ENCODE measurements at regions of chr15 and their contacts with region 1.

Region 1: DNA sequence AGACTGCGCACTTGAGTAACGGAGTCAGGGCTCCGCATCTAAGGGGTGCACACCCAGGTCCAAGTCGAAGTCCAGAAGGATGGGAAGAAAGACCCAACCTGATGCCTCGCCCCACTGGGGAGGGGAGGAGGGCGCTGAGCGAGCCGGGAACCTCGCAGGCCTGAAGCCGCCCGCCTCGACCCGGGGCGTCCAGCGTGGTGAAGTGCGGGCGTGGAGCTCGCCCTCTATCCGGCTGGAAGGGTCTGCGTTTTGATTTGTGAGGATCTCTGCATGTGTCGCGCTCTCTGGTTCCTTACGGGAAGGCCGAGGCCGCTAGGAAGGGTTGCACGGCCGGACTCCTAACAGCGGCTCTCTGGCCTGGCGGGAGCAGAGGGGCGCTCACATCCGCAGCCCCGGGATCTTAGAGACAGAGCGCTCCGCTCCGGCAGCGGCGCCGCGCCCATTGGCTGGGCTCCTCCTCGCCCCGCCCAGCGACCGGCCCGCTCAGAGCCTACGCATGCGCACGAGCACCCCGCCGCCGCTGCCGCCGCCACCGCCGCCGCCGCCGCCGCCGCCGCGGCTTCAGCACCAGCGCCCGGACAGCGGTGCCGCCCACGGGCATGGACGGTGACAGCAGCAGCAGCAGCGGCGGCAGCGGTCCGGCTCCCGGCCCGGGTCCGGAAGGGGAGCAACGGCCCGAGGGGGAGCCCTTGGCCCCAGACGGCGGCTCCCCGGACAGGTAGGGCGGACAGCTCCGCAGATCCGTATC is at the start of gene DISP2:
- DNase-seq: peak; percentile 70 to 93 (median 83)
- H3K4me3 ChIP-seq: peak within 1 kb of the TSS; percentile 50 to 83 (median 72)
- H3K27ac ChIP-seq: peak within 1 kb of the TSS in 54 of 59 donors; percentile 26 to 90 (median 74)
- H3K27me3 ChIP-seq: no peaks in the 10 kb centered on the region
- CTCF ChIP-seq: peak in 37 of 56 donors; percentile 2 to 61 (median 27)
- total RNA-seq, gene DISP2: 11.5 to 58.0 (median 37.6) TPM

Region 2: DNA sequence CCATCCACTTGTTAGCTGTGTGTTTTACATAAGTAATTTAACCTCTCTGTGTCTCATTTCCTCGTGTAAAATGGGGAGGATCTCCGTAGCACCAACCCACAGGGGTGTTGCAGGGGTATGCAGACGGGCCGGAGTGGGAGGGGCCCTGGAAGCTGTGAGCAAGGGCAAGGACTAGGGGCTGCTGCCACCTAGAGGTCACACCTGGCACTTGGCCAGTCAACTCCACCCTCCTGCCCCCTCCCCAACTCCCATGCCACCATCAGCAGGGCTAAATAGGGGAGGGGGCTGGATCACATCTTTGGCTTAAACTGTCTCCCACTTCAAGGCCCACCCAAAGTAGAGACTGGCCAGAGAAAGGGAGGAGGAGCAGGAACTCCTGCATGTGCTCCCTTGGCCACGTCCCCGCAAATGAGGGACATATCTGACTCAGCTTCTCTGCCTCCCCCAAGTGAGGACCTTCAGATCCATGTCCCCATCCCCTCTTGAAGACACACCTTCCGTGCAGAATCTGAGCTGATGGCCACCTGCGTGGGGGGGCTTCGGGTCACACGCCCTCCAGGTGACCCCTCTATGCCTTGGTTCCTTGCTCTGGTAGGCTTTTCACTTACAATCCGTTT is 19.7 kb before region 1 on chr15:
- intact Hi-C with region 1: loop called in 1 of 2 experiments (anchors 2 kb)
- DNase-seq: peak in 4 of 10 donors; percentile 31 to 57 (median 50)
- H3K4me3 ChIP-seq: peak overlapping the region in 9 of 59 donors; percentile 3 to 67 (median 57)
- H3K27ac ChIP-seq: peak overlapping the region in 52 of 59 donors; percentile 79 to 100 (median 98)
- H3K27me3 ChIP-seq: no peaks in the 10 kb centered on the region
- CTCF ChIP-seq: peak; percentile 19 to 78 (median 66)

Region 3: DNA sequence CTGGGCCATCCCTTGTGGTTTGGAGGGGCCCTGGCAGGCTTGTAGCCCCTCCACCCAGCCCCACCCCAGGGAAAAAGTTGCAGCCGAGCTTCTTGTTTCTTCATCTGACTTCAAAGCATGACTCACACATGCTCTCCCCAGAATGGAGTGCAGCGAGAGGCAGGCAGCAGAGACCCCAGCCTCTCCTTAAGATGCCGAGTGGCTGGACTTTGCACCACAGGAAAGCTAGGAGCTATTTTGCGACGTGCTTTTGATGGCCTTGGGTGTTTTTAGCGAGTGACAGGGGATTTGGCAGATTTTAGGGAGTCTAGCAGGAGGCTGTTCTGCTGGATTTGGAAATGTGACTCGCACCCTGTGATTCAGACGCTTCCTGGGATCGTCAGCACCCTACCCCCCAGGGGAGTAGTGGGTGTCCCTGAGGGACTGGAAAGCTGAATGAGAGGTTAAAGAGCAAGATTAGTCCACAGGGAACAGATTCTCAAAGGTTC is 97.1 kb after region 1 on chr15:
- intact Hi-C with region 1: no loop called
- DNase-seq: no peak
- H3K4me3 ChIP-seq: no peak overlapping the region
- H3K27ac ChIP-seq: no peak overlapping the region
- H3K27me3 ChIP-seq: no peaks in the 10 kb centered on the region
- CTCF ChIP-seq: no peak

Measured in dorsolateral prefrontal cortex (tissue), 120 donors.